Activated naive CD4-positive, alpha-beta T cell treated with anti-CD3 and anti-CD28 coated beads for 36 hours (primary cell): ENCODE measurements at regions of chr14 and their contacts with region 1.

Region 1: GRCh38 chr14:20613094-20614037 is 22.2 kb upstream of the RNASE12 start:
- DNase-seq: peak; percentile 92
- H3K4me3 Mint-ChIP-seq: no peak overlapping the region
- H3K27ac Mint-ChIP-seq: no peak overlapping the region
- H3K4me1 Mint-ChIP-seq: peaks cover 10% of the 10 kb centered on the region
- H3K27me3 Mint-ChIP-seq: no peaks in the 10 kb centered on the region

Region 2: GRCh38 chr14:20332788-20333493 is 280.4 kb before region 1 on chr14 and contains the start of gene CCNB1IP1:
- CTCF ChIA-PET with region 1: interaction called, 48 read pairs
- intact Hi-C with region 1: loop called (anchors 1 kb)
- DNase-seq: peak; percentile 71
- H3K4me3 Mint-ChIP-seq: peak within 1 kb of the TSS; percentile 90
- H3K27ac Mint-ChIP-seq: peak within 1 kb of the TSS; percentile 92
- H3K4me1 Mint-ChIP-seq: peaks cover 38% of the 10 kb centered on the region
- H3K27me3 Mint-ChIP-seq: no peaks in the 10 kb centered on the region
- total RNA-seq, gene CCNB1IP1: 93.4 to 98.6 TPM

Region 3: DNA sequence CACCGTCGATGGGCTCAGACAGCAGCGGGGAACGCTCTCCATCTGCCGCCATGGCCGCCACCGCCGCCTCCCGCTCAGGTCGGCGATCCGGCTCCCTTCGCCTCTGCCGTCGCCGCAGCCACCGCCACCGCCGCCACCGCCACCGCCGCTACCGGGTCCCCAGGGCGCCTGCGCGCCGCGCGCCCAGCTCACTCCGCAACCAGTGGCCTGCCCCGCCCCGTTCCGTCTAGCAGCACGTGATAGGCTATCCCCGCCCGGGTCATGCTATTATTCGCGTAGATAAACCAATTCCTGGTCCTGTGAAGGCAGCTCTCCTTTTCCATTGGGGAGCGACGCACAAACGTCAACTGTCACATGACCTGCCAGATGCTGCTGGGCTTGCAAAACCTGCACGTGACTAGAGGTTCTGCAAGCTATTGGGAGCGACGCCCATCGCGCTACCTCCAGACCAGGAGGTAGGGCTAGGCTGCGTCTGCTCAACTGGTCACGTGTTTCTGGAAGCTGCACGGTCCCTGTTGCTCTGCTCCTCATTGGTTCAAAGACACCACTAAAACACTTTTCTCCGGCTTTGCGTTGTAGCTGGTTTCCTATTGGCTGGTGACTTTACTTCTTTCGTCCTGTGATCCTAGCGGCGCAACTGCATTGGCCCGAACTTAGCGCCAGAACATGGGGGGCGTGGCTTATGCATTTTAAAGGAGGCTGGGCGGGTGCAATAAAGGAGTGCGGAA is 151.9 kb before region 1 on chr14 and contains the start of gene PIP4P1:
- CTCF ChIA-PET with region 1: interaction called, 4 read pairs
- intact Hi-C with region 1: loop called (anchors 1 kb)
- DNase-seq: peak; percentile 99
- H3K4me3 Mint-ChIP-seq: peak within 1 kb of the TSS; percentile 92
- H3K27ac Mint-ChIP-seq: peak within 1 kb of the TSS; percentile 96
- H3K4me1 Mint-ChIP-seq: peaks cover 29% of the 10 kb centered on the region
- H3K27me3 Mint-ChIP-seq: no peaks in the 10 kb centered on the region
- total RNA-seq, gene PIP4P1: 31.6 to 32.3 TPM

Region 4: GRCh38 chr14:20624495-20625070 is 11.2 kb after region 1 on chr14:
- CTCF ChIA-PET with region 1: interaction called, 23 read pairs
- intact Hi-C with region 1: loop called (anchors 1 kb)
- DNase-seq: peak; percentile 70
- H3K4me3 Mint-ChIP-seq: peak overlapping the region; percentile 76
- H3K27ac Mint-ChIP-seq: peak overlapping the region; percentile 75
- H3K4me1 Mint-ChIP-seq: peaks cover 65% of the 10 kb centered on the region
- H3K27me3 Mint-ChIP-seq: peaks cover 21% of the 10 kb centered on the region

Region 5: GRCh38 chr14:20682435-20683124 is 69.2 kb after region 1 on chr14:
- CTCF ChIA-PET with region 1: interaction called, 18 read pairs
- intact Hi-C with region 1: loop called (anchors 1 kb)
- DNase-seq: peak; percentile 81
- H3K4me3 Mint-ChIP-seq: no peak overlapping the region
- H3K27ac Mint-ChIP-seq: no peak overlapping the region
- H3K4me1 Mint-ChIP-seq: peaks cover 22% of the 10 kb centered on the region
- H3K27me3 Mint-ChIP-seq: no peaks in the 10 kb centered on the region

Region 6: GRCh38 chr14:20873370-20874177 is 260.2 kb after region 1 on chr14:
- CTCF ChIA-PET with region 1: interaction called, 3 read pairs
- intact Hi-C with region 1: loop called (anchors 5 kb)
- DNase-seq: peak; percentile 93
- H3K4me3 Mint-ChIP-seq: peak overlapping the region; percentile 34
- H3K27ac Mint-ChIP-seq: no peak overlapping the region
- H3K4me1 Mint-ChIP-seq: peaks cover 10% of the 10 kb centered on the region
- H3K27me3 Mint-ChIP-seq: peaks cover 6% of the 10 kb centered on the region